CD4-positive, alpha-beta memory T cell (primary cell): ENCODE measurements at regions of chr5 and their contacts with region 1.

Region 1: GRCh38 chr5:40378396-40379177 is 301.1 kb upstream of the PTGER4 start:
- DNase-seq: peak in 4 of 5 donors; percentile 40 to 51 (median 48)
- H3K4me3 ChIP-seq: no peak overlapping the region
- H3K4me3 Mint-ChIP-seq: peak overlapping the region in 7 of 8 donors; percentile 19 to 75 (median 53)
- H3K27ac ChIP-seq: peak overlapping the region; percentile 18
- H3K27ac Mint-ChIP-seq: peak overlapping the region; percentile 77 to 96 (median 88)
- H3K4me1 ChIP-seq: peaks cover 45% of the 10 kb centered on the region
- H3K4me1 Mint-ChIP-seq: peaks cover 35 to 57% (median 43%) of the 10 kb centered on the region in 4 donors
- H3K27me3 ChIP-seq: no peaks in the 10 kb centered on the region
- H3K27me3 Mint-ChIP-seq: no peaks in the 10 kb centered on the region

Region 2: GRCh38 chr5:40198736-40199135 is 179.9 kb before region 1 on chr5:
- CTCF ChIA-PET with region 1: no interaction called
- POLR2A ChIA-PET with region 1: no interaction called
- intact Hi-C with region 1: no loop called
- DNase-seq: no peak
- H3K4me3 ChIP-seq: no peak overlapping the region
- H3K4me3 Mint-ChIP-seq: no peak overlapping the region
- H3K27ac ChIP-seq: no peak overlapping the region
- H3K27ac Mint-ChIP-seq: no peak overlapping the region
- H3K4me1 ChIP-seq: peaks cover 3% of the 10 kb centered on the region
- H3K4me1 Mint-ChIP-seq: peaks cover under 1 to 2% (median 1%) of the 10 kb centered on the region in 4 donors
- H3K27me3 ChIP-seq: no peaks in the 10 kb centered on the region
- H3K27me3 Mint-ChIP-seq: no peaks in the 10 kb centered on the region

Region 3: GRCh38 chr5:40391642-40392041 is 13.1 kb after region 1 on chr5:
- CTCF ChIA-PET with region 1: interaction called, 9 read pairs
- POLR2A ChIA-PET with region 1: interaction called, 14 read pairs
- intact Hi-C with region 1: no loop called
- DNase-seq: no peak
- H3K4me3 ChIP-seq: no peak overlapping the region
- H3K4me3 Mint-ChIP-seq: peak overlapping the region in 1 of 8 donors; percentile 6
- H3K27ac ChIP-seq: no peak overlapping the region
- H3K27ac Mint-ChIP-seq: peak overlapping the region in 5 of 7 donors; percentile 17 to 79 (median 63)
- H3K4me1 ChIP-seq: peaks cover 52% of the 10 kb centered on the region
- H3K4me1 Mint-ChIP-seq: peaks cover 42 to 58% (median 46%) of the 10 kb centered on the region in 4 donors
- H3K27me3 ChIP-seq: no peaks in the 10 kb centered on the region
- H3K27me3 Mint-ChIP-seq: no peaks in the 10 kb centered on the region